ENCODE measurements at regions of chr19 and their contacts with region 1.

Region 1: DNA sequence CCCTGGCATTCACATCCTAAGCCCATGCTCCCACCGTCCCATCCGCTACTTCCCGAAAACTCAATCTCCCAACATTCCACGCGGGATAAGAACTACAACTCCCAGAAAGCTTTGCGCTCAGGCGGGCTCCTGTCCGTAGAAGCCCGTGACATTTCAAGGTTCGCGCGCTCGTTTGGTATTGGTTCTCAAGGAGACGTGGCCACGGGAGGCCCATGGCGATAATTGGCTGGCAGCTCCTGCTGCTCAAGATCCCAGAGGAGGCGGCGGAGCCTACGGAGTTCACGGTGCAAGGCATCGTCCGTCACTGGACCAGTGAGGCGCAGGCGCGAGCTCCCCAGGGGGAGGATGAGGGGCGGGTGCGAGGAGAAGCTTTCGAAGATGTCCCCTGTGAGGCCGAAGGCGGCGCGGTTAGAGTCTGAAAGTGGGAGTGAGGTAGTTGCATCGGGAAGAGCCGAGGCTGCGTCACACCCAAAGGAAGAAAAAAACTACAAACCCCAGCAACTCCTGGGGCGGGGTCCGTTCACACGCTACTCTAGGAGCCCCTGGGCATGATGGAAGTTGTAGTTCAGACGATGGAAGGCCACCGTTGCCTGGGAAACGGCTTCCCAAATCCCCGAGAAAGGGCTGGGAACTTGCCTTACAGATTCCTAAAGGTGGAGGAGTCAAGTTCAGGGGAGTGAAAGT is 1.2 kb upstream of the MAMSTR start:
- DNase-seq: peak; percentile 97
- H3K4me3 Mint-ChIP-seq: peak overlapping the region; percentile 89
- H3K27ac Mint-ChIP-seq: peak overlapping the region; percentile 97
- H3K4me1 Mint-ChIP-seq: peaks cover 10% of the 10 kb centered on the region
- H3K27me3 Mint-ChIP-seq: no peaks in the 10 kb centered on the region

Region 2: GRCh38 chr19:48553676-48554386 is 166.9 kb before region 1 on chr19:
- CTCF ChIA-PET with region 1: no interaction called
- POLR2A ChIA-PET with region 1: no interaction called
- intact Hi-C with region 1: no loop called
- DNase-seq: no peak
- H3K4me3 Mint-ChIP-seq: no peak overlapping the region
- H3K27ac Mint-ChIP-seq: no peak overlapping the region
- H3K4me1 Mint-ChIP-seq: no peaks in the 10 kb centered on the region
- H3K27me3 Mint-ChIP-seq: peaks cover 2% of the 10 kb centered on the region

Region 3: DNA sequence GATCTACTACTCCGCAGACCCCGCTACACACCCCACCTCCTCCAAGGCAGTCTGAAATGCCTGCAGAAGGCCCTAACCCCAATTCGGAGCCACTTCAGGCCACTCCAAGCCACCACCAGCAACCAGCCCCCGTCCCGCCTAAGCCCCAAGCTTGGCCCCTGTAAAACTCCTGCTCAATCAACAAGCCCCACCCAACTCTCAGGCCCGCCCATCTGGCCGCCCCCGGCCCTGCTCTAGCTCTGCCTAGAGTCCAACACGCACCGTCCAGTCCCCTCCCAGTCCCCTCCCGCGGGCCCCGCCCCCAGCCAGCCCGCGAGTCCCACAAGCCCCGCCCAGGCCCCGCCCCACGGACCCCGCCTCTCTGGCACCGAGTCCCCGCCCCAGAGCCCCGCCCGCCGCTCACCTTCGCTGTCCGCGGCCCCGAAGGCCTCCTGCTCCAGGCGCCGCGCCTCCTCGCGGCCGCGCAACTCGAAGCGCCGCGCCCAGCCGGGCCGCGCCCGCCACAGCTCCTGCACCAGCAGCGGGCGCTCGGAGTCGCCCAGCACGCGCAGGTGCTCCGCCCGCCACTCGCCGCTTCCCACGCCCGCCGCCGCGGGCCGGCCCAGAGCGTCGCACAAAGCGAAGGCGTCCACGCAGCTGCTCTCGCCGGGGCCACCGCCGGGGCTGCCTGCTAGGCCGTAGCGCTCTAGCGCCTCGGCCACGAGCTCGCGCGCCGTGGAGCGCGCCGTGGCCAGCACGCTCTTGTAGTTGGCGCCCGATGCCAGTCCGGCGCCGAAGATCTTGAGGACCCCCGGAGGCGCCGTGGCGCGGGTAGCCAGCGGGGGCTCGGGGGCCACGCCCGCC is 18.0 kb after region 1 on chr19:
- CTCF ChIA-PET with region 1: interaction called, 23 read pairs
- POLR2A ChIA-PET with region 1: interaction called, 3 read pairs
- intact Hi-C with region 1: loop called (anchors 2 kb)
- DNase-seq: peak; percentile 97
- H3K4me3 Mint-ChIP-seq: peak overlapping the region; percentile 34
- H3K27ac Mint-ChIP-seq: peak overlapping the region; percentile 21
- H3K4me1 Mint-ChIP-seq: peaks cover 13% of the 10 kb centered on the region
- H3K27me3 Mint-ChIP-seq: peaks cover 7% of the 10 kb centered on the region